Activated T-helper 1 cell treated with anti-CD3 and anti-CD28 coated beads, Interleukin-12 subunit alpha, Interleukin-12 subunit beta, Interleukin-2, Interleukin-4 antibody, amounts not matched to agents 30 ng/mL and 10 ng/mL and 1 ng/mL, durations not matched to agents 14 hours and 24 hours and 36 hours (primary cell): ENCODE measurements at regions of chr19 and their contacts with region 1.

Region 1: GRCh38 chr19:58380722-58381466 is at the start of gene ZNF837:
- DNase-seq: peak; percentile 98
- H3K4me3 Mint-ChIP-seq: peak within 1 kb of the TSS; percentile 87
- H3K27ac Mint-ChIP-seq: peak within 1 kb of the TSS; percentile 89
- H3K4me1 Mint-ChIP-seq: peaks cover 22% of the 10 kb centered on the region
- H3K27me3 Mint-ChIP-seq: no peaks in the 10 kb centered on the region
- total RNA-seq, gene ZNF837: 0.86 and 1.4 TPM in 2 replicates

Region 2: DNA sequence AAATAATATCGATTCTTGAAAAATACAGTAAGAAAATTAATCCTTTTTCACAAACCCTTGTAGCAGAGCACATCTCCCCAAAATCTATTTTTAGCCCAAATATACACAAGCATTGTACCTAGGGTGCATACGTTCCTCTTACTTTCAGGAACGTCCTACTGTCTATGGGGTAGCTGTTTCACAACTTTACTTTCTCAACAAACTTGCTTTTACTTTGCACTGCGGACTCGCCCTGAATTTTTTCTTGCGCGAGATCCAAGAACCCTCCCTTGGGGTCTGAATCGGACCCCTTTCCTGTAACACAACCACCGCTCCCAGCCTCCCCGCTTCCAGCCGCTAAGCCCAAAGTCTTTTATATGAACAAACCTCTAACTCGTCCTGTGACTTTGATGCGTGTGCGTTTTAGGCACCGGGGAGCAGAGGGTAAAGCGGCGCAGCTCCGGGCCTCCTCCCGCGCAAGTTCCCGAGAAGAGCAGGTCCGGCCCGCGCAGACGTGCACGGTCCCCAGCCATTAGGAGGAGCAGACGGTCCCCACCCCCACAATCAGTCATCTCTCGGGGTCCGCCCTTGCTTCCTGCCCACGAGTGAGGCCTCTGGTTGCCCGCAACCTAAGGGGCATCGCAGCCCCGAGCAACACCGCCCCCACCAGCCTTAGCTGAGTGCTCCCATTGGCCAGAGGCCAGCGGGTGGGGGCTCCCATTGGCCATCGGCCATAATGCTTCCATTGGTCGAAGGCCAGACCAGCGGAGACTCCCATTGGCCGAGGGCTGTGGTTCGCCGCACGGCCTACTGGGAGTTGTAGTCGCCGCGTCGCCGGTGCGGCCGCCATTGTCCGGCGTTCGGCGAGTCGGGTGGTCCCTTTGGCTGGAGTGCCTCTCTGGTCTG is 102.5 kb before region 1 on chr19 and contains the start of gene ZNF8:
- intact Hi-C with region 1: loop called (anchors 1 kb)
- DNase-seq: peak; percentile 97
- H3K4me3 Mint-ChIP-seq: peak within 1 kb of the TSS; percentile 92
- H3K27ac Mint-ChIP-seq: peak within 1 kb of the TSS; percentile 93
- H3K4me1 Mint-ChIP-seq: peaks cover 23% of the 10 kb centered on the region
- H3K27me3 Mint-ChIP-seq: no peaks in the 10 kb centered on the region
- total RNA-seq, gene ZNF8: 4.0 and 4.4 TPM in 2 replicates

Region 3: DNA sequence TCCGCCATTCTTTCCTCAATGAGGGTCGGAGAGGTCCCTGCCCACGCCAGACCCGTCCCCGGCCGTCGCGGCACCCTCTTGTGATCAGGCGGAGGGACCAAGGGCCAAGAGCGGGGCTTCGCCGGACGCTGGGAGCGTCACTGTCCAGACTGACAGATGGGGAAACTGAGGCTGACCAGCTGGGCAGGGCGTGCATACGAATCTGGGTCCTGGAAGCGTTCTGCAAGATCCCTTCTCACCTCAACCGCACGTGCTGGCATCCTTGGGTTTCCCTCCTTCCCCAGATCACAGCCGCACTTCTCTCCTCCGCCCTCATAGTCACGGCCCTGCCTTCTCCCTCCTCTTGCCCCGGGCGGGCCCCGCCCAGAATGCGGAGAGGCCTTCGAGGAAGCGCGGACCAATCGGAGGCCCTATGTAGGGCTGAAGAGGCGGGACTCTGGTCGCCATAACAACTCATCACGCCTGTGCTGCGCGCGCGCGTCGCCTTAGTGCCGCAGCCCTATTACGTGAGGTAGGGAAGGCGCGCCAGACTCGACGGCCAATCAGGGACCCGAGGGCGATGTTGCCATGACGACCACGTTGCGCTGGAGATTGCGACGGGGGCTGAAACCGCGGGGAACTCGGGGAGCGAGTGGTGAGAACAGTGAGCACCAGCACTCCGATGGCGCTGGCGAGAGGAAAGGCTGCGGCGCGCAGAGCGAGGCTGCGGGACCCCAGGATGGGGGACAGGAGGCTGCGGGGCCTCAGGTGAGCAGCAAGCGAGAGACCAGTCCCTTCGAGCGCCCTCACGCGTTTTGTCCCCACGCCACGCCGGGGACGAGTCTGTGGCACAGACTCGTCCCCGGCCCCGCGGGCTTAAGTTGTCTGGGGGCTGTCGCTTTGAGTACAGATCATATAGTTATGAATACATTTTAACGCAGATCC is 20.3 kb after region 1 on chr19:
- intact Hi-C with region 1: loop called (anchors 1 kb)
- DNase-seq: peak; percentile 99
- H3K4me3 Mint-ChIP-seq: peak overlapping the region; percentile 86
- H3K27ac Mint-ChIP-seq: peak overlapping the region; percentile 88
- H3K4me1 Mint-ChIP-seq: peaks cover 24% of the 10 kb centered on the region
- H3K27me3 Mint-ChIP-seq: peaks cover 5% of the 10 kb centered on the region

Region 4: DNA sequence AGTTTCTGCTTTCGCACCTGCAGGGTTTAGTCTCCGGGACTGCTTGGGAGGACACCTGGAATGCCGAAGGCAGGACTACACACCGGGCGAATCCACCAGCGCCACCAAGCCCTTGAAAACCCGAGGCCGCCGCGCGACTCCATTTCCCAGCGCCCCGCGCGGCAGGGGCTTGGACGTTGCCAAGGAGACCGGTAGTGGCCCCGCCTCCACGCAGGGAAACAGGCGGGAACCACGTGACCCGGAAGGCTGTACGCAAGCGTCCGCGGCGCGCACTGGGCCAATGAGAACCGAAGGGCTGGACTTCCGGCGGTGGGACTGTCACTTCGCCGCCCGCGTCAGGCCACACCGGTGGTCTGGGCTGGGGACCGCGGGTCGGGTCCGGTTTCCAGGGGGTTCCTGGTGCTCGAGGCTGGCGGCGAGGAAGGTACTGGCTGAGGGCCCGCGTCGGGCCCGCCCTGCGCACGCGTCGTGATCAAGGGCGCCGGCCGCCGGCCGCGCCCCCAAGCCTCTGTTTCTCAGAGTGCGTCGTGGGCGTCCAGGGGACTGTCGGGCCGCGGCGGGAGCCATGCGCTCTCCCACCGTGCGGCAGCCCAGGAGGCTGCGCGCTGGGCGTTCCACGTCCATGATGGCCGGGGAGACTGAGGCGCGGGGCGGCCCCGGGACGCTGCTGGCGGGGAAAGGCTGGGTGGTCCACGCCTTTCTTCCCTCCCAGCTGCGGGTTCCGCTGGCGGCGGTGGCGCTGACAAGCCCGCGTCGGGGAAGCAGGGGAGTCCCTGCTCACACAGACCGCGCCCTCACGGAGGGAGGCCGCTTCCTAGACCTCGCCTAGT is 86.1 kb after region 1 on chr19 and contains the start of gene ZNF324:
- intact Hi-C with region 1: loop called (anchors 1 kb)
- DNase-seq: peak; percentile 96
- H3K4me3 Mint-ChIP-seq: peak within 1 kb of the TSS; percentile 88
- H3K27ac Mint-ChIP-seq: peak within 1 kb of the TSS; percentile 71
- H3K4me1 Mint-ChIP-seq: peaks cover 17% of the 10 kb centered on the region
- H3K27me3 Mint-ChIP-seq: no peaks in the 10 kb centered on the region
- total RNA-seq, gene ZNF324: 12.8 and 15.5 TPM in 2 replicates

Region 5: GRCh38 chr19:58519355-58520256 is 138.7 kb after region 1 on chr19 and contains the start of gene ZBTB45:
- intact Hi-C with region 1: loop called (anchors 2 kb)
- DNase-seq: peak; percentile 91
- H3K4me3 Mint-ChIP-seq: peak within 1 kb of the TSS; percentile 99
- H3K27ac Mint-ChIP-seq: peak within 1 kb of the TSS; percentile 99
- H3K4me1 Mint-ChIP-seq: peaks cover 34% of the 10 kb centered on the region
- H3K27me3 Mint-ChIP-seq: peaks cover 3% of the 10 kb centered on the region
- total RNA-seq, gene ZBTB45: 15.9 and 17.4 TPM in 2 replicates